Uterus (tissue), 4 donors: ENCODE measurements at regions of chr18 and their contacts with region 1.

Region 1: GRCh38 chr18:12287684-12288402 is 20.2 kb upstream of the TUBB6 start:
- DNase-seq: peak; percentile 84 to 85
- H3K4me3 ChIP-seq: peak overlapping the region; percentile 33 to 36
- H3K27ac ChIP-seq: peak overlapping the region; percentile 78 to 80
- H3K4me1 ChIP-seq: no peaks in the 10 kb centered on the region
- H3K27me3 ChIP-seq: no peaks in the 10 kb centered on the region
- CTCF ChIP-seq: no peak
- POLR2A ChIP-seq: peak in 1 of 2 donors; percentile 56

Region 2: DNA sequence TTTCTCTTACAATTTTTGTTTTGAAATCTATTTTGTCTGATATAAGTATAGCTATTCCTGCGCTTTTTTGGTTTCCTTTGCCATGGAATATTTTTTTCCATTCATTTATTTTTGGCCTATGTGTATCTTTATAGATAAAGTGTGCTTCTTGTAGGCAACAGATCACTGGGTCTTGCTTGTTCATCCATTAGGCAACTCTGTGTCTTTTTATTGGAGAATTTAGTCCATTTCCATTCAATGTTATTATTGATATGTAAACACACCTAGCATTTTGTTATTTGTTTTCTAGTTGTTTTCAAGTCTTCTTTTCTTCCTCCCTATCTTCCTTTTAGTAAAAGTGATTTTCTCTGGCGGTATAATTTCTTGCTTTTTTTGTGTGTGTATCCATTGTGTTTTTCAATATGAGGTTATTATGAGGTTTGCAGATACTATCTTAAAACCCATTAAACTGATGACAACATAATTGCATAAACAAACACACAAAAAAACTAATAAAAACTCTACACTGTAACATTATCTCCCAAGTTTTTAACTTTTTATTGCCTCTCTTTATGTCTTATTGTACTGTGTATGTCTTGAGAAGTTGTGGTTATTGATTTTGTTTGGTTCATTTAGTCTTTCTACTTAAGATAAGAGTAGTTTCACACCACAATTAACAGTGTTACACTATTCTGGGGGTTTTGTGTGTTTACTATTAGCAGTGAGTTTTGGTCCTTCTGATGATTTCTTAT is 122.6 kb before region 1 on chr18:
- intact Hi-C with region 1: no loop called
- DNase-seq: no peak
- H3K4me3 ChIP-seq: no peak overlapping the region
- H3K27ac ChIP-seq: no peak overlapping the region
- H3K4me1 ChIP-seq: no peaks in the 10 kb centered on the region
- H3K27me3 ChIP-seq: no peaks in the 10 kb centered on the region
- CTCF ChIP-seq: no peak
- POLR2A ChIP-seq: no peak

Region 3: GRCh38 chr18:12233378-12233777 is 54.5 kb before region 1 on chr18:
- intact Hi-C with region 1: no loop called
- DNase-seq: no peak
- H3K4me3 ChIP-seq: no peak overlapping the region
- H3K27ac ChIP-seq: no peak overlapping the region
- H3K4me1 ChIP-seq: no peaks in the 10 kb centered on the region
- H3K27me3 ChIP-seq: no peaks in the 10 kb centered on the region
- CTCF ChIP-seq: no peak
- POLR2A ChIP-seq: no peak

Region 4: DNA sequence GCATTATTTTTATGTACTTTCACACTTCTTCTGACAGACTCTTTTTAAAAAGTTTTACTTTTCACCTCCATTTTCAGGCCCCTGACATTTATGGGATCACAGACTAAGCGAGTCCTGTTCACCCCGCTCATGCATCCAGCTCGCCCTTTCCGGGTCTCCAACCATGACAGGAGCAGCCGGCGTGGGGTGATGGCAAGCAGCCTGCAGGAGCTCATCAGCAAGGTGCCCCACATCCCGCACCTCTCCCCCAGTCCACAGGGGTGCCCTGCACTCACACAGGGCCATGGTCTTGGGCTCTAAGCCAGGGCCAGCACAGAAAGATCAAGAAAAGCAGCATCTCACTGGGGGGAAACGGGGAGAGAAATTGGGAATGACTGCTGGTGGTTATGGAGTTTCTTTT is 25.1 kb before region 1 on chr18:
- intact Hi-C with region 1: no loop called
- DNase-seq: no peak
- H3K4me3 ChIP-seq: no peak overlapping the region
- H3K27ac ChIP-seq: no peak overlapping the region
- H3K4me1 ChIP-seq: no peaks in the 10 kb centered on the region
- H3K27me3 ChIP-seq: no peaks in the 10 kb centered on the region
- CTCF ChIP-seq: no peak
- POLR2A ChIP-seq: no peak

Region 5: GRCh38 chr18:12376718-12377555 is 89.1 kb after region 1 on chr18 and contains the start of gene AFG3L2:
- intact Hi-C with region 1: loop called (anchors 10 kb)
- DNase-seq: peak; percentile 100
- H3K4me3 ChIP-seq: peak within 1 kb of the TSS; percentile 60 to 84
- H3K27ac ChIP-seq: peak within 1 kb of the TSS; percentile 91 to 99
- H3K4me1 ChIP-seq: no peaks in the 10 kb centered on the region
- H3K27me3 ChIP-seq: no peaks in the 10 kb centered on the region
- CTCF ChIP-seq: peak in 1 of 4 experiments; percentile 23
- POLR2A ChIP-seq: peak; percentile 96 to 99
- total RNA-seq, gene AFG3L2: 18.5 to 53.1 (median 33.7) TPM

Region 6: GRCh38 chr18:12597775-12598174 is 309.9 kb after region 1 on chr18:
- intact Hi-C with region 1: no loop called
- DNase-seq: no peak
- H3K4me3 ChIP-seq: no peak overlapping the region
- H3K27ac ChIP-seq: no peak overlapping the region
- H3K4me1 ChIP-seq: no peaks in the 10 kb centered on the region
- H3K27me3 ChIP-seq: no peaks in the 10 kb centered on the region
- CTCF ChIP-seq: no peak
- POLR2A ChIP-seq: no peak